Endothelial cell of umbilical vein (primary cell): ENCODE measurements at regions of chr5 and their contacts with region 1.

Region 1: GRCh38 chr5:154112255-154112654 is 73.5 kb downstream of the MFAP3 start:
- DNase-seq: no peak
- H3K4me3 ChIP-seq: no peak overlapping the region
- H3K27ac ChIP-seq: no peak overlapping the region
- H3K4me1 ChIP-seq: no peaks in the 10 kb centered on the region
- H3K27me3 ChIP-seq: peaks cover 5 to 13% of the 10 kb centered on the region in 2 experiments
- CTCF ChIP-seq: no peak
- POLR2A ChIP-seq: no peak

Region 2: GRCh38 chr5:153700940-153701339 is 411.3 kb before region 1 on chr5:
- CTCF ChIA-PET with region 1: no interaction called
- POLR2A ChIA-PET with region 1: no interaction called
- dilution Hi-C with region 1: no loop called
- intact Hi-C with region 1: no loop called
- DNase-seq: no peak
- H3K4me3 ChIP-seq: no peak overlapping the region
- H3K27ac ChIP-seq: no peak overlapping the region
- H3K4me1 ChIP-seq: no peaks in the 10 kb centered on the region
- H3K27me3 ChIP-seq: no peaks in the 10 kb centered on the region
- CTCF ChIP-seq: no peak
- POLR2A ChIP-seq: no peak

Region 3: GRCh38 chr5:153813901-153814300 is 298.4 kb before region 1 on chr5:
- CTCF ChIA-PET with region 1: no interaction called
- POLR2A ChIA-PET with region 1: no interaction called
- dilution Hi-C with region 1: no loop called
- intact Hi-C with region 1: no loop called
- DNase-seq: no peak
- H3K4me3 ChIP-seq: no peak overlapping the region
- H3K27ac ChIP-seq: no peak overlapping the region
- H3K4me1 ChIP-seq: no peaks in the 10 kb centered on the region
- H3K27me3 ChIP-seq: no peaks in the 10 kb centered on the region
- CTCF ChIP-seq: no peak
- POLR2A ChIP-seq: no peak

Region 4: GRCh38 chr5:153863951-153864350 is 248.3 kb before region 1 on chr5:
- CTCF ChIA-PET with region 1: no interaction called
- POLR2A ChIA-PET with region 1: no interaction called
- dilution Hi-C with region 1: no loop called
- intact Hi-C with region 1: no loop called
- DNase-seq: no peak
- H3K4me3 ChIP-seq: no peak overlapping the region
- H3K27ac ChIP-seq: no peak overlapping the region
- H3K4me1 ChIP-seq: no peaks in the 10 kb centered on the region
- H3K27me3 ChIP-seq: no peaks in the 10 kb centered on the region
- CTCF ChIP-seq: no peak
- POLR2A ChIP-seq: no peak

Region 5: DNA sequence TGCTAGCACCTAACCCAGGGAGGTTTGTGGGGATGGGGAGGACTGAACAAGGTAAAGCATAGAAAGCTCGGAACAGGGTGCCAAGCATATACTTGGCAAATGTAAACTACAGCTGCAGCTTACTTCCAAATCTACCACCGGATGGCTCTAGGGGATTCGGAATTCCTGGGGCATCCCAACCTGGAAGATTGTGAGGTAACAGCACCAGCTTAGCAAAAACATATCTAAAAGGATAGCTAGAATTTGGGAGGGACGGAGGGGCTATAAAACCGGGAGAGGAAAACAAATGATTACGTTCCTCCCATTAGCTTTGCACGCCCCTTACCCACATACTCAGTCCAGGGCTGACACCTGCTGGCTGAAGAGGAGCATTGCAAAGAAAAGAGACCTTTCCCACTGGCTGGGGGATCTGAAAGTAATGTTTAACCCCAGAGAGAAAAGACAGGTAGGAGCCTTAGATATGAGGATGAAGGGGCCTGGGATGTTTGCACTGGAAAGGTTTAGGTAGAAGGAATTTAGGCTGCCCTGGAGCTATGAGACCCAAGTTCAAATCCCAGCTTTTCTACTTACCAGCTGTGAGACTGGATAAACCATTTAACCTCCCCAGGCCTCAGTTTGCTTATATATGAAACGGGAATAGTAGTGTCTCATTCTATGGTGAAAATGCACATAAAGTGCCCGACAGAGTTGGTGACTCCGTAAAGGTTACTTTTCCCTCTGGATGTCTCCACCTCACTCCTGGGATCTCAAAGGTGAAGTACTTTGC is 147.2 kb before region 1 on chr5:
- CTCF ChIA-PET with region 1: no interaction called
- POLR2A ChIA-PET with region 1: no interaction called
- dilution Hi-C with region 1: no loop called
- intact Hi-C with region 1: no loop called
- DNase-seq: peak; percentile 52
- H3K4me3 ChIP-seq: no peak overlapping the region
- H3K27ac ChIP-seq: no peak overlapping the region
- H3K4me1 ChIP-seq: no peaks in the 10 kb centered on the region
- H3K27me3 ChIP-seq: no peaks in the 10 kb centered on the region
- CTCF ChIP-seq: peak; percentile 79 to 80
- POLR2A ChIP-seq: no peak

Region 6: GRCh38 chr5:154145268-154145667 is 33.0 kb after region 1 on chr5:
- CTCF ChIA-PET with region 1: no interaction called
- POLR2A ChIA-PET with region 1: interaction called, 11 read pairs
- dilution Hi-C with region 1: no loop called
- intact Hi-C with region 1: no loop called
- DNase-seq: no peak
- H3K4me3 ChIP-seq: no peak overlapping the region
- H3K27ac ChIP-seq: no peak overlapping the region
- H3K4me1 ChIP-seq: no peaks in the 10 kb centered on the region
- H3K27me3 ChIP-seq: peaks cover 0 to 2% of the 10 kb centered on the region in 2 experiments
- CTCF ChIP-seq: no peak
- POLR2A ChIP-seq: no peak